Ovary (tissue), 10 donors: ENCODE measurements at regions of chr18 and their contacts with region 1.

Region 1: GRCh38 chr18:57881818-57882413 is 78.8 kb upstream of the ATP8B1 start:
- DNase-seq: peak; percentile 15 to 61 (median 55)
- H3K4me3 ChIP-seq: no peak overlapping the region
- H3K27ac ChIP-seq: no peak overlapping the region
- H3K4me1 ChIP-seq: peaks cover 1% of the 10 kb centered on the region
- H3K27me3 ChIP-seq: no peaks in the 10 kb centered on the region
- CTCF ChIP-seq: peak; percentile 45 to 62 (median 55)
- EP300 ChIP-seq: no peak
- POLR2A ChIP-seq: no peak

Region 2: DNA sequence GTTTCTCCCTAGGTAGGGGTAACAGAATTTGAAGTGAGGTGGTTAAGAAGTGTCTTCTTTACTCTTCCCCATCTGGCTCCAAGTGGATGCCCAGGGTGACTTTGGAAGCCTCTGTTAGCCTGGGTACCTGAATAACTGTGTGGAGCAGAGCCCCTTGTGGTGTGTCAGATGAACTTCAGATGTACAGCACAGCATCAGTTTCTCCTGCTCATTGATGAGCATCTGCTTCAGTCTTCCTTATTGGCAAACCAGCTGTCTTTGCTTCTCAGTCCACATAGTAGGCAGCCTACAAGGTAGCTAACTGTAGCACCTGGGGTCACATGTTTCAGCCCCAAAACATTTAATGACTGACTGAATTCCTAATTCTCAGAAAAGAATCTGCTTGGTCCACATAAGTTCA is 22.6 kb before region 1 on chr18:
- intact Hi-C with region 1: no loop called
- DNase-seq: no peak
- H3K4me3 ChIP-seq: no peak overlapping the region
- H3K27ac ChIP-seq: no peak overlapping the region
- H3K4me1 ChIP-seq: no peaks in the 10 kb centered on the region
- H3K27me3 ChIP-seq: no peaks in the 10 kb centered on the region
- CTCF ChIP-seq: no peak
- EP300 ChIP-seq: no peak
- POLR2A ChIP-seq: no peak

Region 3: GRCh38 chr18:58113337-58113736 is 231.4 kb after region 1 on chr18:
- intact Hi-C with region 1: no loop called
- DNase-seq: no peak
- H3K4me3 ChIP-seq: no peak overlapping the region
- H3K27ac ChIP-seq: no peak overlapping the region
- H3K4me1 ChIP-seq: peaks cover 1% of the 10 kb centered on the region
- H3K27me3 ChIP-seq: no peaks in the 10 kb centered on the region
- CTCF ChIP-seq: no peak
- EP300 ChIP-seq: no peak
- POLR2A ChIP-seq: no peak

Region 4: GRCh38 chr18:58128381-58129374 is 246.8 kb after region 1 on chr18:
- intact Hi-C with region 1: loop called in 2 of 4 experiments (anchors 2 to 10 kb)
- DNase-seq: no peak
- H3K4me3 ChIP-seq: no peak overlapping the region
- H3K27ac ChIP-seq: no peak overlapping the region
- H3K4me1 ChIP-seq: no peaks in the 10 kb centered on the region
- H3K27me3 ChIP-seq: no peaks in the 10 kb centered on the region
- CTCF ChIP-seq: no peak
- EP300 ChIP-seq: no peak
- POLR2A ChIP-seq: no peak

Region 5: DNA sequence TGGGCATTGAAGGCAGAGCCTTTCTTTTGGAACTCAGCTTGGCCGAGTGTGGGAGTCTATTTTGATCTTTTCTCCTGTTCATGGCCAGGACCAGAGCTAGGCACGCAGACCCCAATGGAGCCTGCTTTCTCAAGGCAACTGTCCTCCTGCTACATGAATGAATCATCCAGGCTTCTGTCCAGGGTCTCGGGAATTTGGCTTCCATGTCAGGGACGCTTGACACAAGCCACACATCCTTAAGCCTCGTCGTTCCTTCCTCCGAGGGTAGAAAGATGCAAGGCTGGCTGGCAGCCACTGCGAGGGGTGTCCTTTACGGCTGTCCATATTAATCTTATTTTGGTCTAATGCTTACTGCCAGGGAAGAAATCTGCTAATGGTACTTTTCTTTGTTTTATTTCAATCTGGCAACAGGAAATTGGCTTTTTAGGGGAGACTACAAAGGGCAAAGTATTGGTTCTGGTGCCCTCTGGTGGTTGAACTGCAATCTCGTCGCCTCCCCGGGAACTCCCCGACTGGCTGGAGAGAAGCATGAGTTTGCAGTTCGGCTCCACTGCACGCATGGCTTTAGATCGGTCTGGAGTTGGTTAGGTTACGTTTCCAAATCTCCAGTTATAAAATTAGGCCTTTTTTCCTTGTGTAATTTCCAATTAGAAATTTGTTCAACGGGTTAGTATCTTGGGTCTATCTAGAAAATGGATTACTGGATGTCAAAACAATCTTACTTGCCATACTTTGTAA is 611.8 kb after region 1 on chr18:
- intact Hi-C with region 1: loop called in 1 of 4 experiments (anchors 5 kb)
- DNase-seq: peak; percentile 73 to 82 (median 80)
- H3K4me3 ChIP-seq: no peak overlapping the region
- H3K27ac ChIP-seq: peak overlapping the region in 1 of 2 donors; percentile 36
- H3K4me1 ChIP-seq: peaks cover 1% of the 10 kb centered on the region
- H3K27me3 ChIP-seq: no peaks in the 10 kb centered on the region
- CTCF ChIP-seq: peak; percentile 66 to 81 (median 77)
- EP300 ChIP-seq: no peak
- POLR2A ChIP-seq: no peak

Region 6: GRCh38 chr18:58761241-58761969 is 879.5 kb after region 1 on chr18:
- intact Hi-C with region 1: loop called in 2 of 4 experiments (anchors 5 to 10 kb)
- DNase-seq: no peak
- H3K4me3 ChIP-seq: no peak overlapping the region
- H3K27ac ChIP-seq: no peak overlapping the region
- H3K4me1 ChIP-seq: no peaks in the 10 kb centered on the region
- H3K27me3 ChIP-seq: no peaks in the 10 kb centered on the region
- CTCF ChIP-seq: no peak
- EP300 ChIP-seq: no peak
- POLR2A ChIP-seq: no peak

Region 7: GRCh38 chr18:58768293-58768974 is 886.5 kb after region 1 on chr18:
- intact Hi-C with region 1: loop called in 2 of 4 experiments (anchors 5 to 10 kb)
- DNase-seq: peak; percentile 60 to 83 (median 70)
- H3K4me3 ChIP-seq: peak overlapping the region; percentile 24
- H3K27ac ChIP-seq: no peak overlapping the region
- H3K4me1 ChIP-seq: peaks cover 3% of the 10 kb centered on the region
- H3K27me3 ChIP-seq: no peaks in the 10 kb centered on the region
- CTCF ChIP-seq: peak; percentile 38 to 63 (median 43)
- EP300 ChIP-seq: no peak
- POLR2A ChIP-seq: no peak